ENCODE measurements at regions of chr3 and their contacts with region 1.

Region 1: GRCh38 chr3:52001443-52001974 is 5.8 kb upstream of the RPL29 start:
- DNase-seq: peak; percentile 85
- ATAC-seq: peak; percentile 99
- H3K4me3 Mint-ChIP-seq: no peak overlapping the region
- H3K27ac Mint-ChIP-seq: no peak overlapping the region
- H3K4me1 Mint-ChIP-seq: peaks cover 5% of the 10 kb centered on the region
- H3K27me3 Mint-ChIP-seq: peaks cover 2% of the 10 kb centered on the region
- CTCF ChIP-seq: peak; percentile 56

Region 2: DNA sequence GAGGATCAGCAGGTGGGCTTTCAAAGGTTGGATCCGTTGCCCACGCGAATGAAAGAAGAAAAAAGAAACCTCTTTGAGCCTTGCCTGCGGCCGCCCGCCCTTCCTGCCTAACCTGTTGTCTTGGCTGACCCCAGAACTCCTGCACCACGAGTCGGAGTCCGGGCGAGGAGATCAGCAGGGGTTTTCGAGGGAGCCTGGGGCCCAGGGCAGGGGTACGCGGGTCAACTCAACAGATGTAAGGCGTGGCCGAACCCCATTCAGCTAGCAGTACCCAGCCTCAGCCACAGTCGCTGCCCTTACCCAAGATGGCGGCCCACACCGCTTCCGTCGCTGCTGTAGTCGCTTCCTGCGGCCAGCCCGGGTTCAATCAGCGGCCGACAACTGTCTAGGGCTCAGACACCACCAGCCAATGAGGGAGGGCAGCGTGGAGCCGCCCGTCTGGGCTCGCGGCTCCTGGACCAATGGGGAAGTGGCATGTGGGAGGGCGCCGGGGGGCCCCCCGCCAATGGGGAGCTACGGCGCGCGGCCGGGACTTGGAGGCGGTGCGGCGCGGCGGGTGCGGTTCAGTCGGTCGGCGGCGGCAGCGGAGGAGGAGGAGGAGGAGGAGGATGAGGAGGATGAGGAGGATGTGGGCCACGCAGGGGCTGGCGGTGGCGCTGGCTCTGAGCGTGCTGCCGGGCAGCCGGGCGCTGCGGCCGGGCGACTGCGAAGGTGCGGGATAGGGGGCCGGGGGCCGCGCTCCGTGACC is 616.6 kb before region 1 on chr3 and contains the start of gene MANF:
- CTCF ChIA-PET with region 1: no interaction called
- POLR2A ChIA-PET with region 1: no interaction called
- intact Hi-C with region 1: no loop called
- DNase-seq: peak; percentile 89
- ATAC-seq: peak; percentile 95
- H3K4me3 Mint-ChIP-seq: peak within 1 kb of the TSS; percentile 99
- H3K27ac Mint-ChIP-seq: peak within 1 kb of the TSS; percentile 98
- H3K4me1 Mint-ChIP-seq: peaks cover 49% of the 10 kb centered on the region
- H3K27me3 Mint-ChIP-seq: no peaks in the 10 kb centered on the region
- CTCF ChIP-seq: no peak
- total RNA-seq, gene MANF: 64.2 and 66.1 TPM in 2 replicates

Region 3: GRCh38 chr3:52123106-52123725 is 121.7 kb after region 1 on chr3:
- CTCF ChIA-PET with region 1: interaction called, 38 read pairs
- POLR2A ChIA-PET with region 1: no interaction called
- intact Hi-C with region 1: loop called (anchors 1 kb)
- DNase-seq: peak; percentile 60
- ATAC-seq: peak; percentile 74
- H3K4me3 Mint-ChIP-seq: no peak overlapping the region
- H3K27ac Mint-ChIP-seq: peak overlapping the region; percentile 82
- H3K4me1 Mint-ChIP-seq: peaks cover 34% of the 10 kb centered on the region
- H3K27me3 Mint-ChIP-seq: no peaks in the 10 kb centered on the region
- CTCF ChIP-seq: no peak

Region 4: DNA sequence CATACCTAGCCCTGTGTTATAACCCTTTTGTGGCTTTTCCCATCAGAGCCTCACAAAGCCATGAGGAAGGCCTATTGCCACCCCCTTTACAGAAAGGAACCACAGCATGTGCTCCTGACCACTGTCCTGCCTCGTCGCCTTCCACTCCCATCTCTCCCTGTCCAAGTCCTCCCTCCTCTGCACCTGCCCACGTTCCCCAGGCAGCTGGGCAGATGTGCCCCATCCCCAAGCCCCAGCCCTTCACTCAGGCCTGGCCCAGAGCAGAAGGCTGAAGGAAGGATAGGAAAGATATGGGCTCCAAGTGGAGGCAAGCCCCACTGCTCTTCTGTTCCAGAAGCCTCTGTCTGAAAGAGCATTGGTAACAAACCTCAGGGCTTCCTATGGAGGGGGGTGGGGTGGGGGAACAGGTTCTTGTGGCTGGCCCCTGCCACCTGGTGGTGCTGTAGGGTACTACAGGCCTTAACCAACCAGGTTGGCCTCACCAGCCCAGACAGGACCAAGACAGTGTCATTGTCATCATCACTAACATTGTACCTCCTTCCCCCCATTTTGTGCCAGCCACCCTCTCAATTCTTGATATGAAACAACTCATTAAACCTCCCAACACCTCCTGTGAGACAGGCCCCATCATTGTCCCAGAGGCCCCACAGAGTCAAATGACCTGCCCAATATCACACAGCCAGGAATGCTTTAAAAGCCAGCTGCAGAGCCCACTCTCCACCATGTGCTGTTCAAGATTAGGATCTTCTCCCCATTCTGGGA is 142.7 kb after region 1 on chr3:
- CTCF ChIA-PET with region 1: interaction called, 78 read pairs
- POLR2A ChIA-PET with region 1: interaction called, 3 read pairs
- intact Hi-C with region 1: loop called (anchors 1 kb)
- DNase-seq: peak; percentile 73
- ATAC-seq: peak; percentile 100
- H3K4me3 Mint-ChIP-seq: no peak overlapping the region
- H3K27ac Mint-ChIP-seq: no peak overlapping the region
- H3K4me1 Mint-ChIP-seq: peaks cover 4% of the 10 kb centered on the region
- H3K27me3 Mint-ChIP-seq: no peaks in the 10 kb centered on the region
- CTCF ChIP-seq: peak; percentile 66

Region 5: DNA sequence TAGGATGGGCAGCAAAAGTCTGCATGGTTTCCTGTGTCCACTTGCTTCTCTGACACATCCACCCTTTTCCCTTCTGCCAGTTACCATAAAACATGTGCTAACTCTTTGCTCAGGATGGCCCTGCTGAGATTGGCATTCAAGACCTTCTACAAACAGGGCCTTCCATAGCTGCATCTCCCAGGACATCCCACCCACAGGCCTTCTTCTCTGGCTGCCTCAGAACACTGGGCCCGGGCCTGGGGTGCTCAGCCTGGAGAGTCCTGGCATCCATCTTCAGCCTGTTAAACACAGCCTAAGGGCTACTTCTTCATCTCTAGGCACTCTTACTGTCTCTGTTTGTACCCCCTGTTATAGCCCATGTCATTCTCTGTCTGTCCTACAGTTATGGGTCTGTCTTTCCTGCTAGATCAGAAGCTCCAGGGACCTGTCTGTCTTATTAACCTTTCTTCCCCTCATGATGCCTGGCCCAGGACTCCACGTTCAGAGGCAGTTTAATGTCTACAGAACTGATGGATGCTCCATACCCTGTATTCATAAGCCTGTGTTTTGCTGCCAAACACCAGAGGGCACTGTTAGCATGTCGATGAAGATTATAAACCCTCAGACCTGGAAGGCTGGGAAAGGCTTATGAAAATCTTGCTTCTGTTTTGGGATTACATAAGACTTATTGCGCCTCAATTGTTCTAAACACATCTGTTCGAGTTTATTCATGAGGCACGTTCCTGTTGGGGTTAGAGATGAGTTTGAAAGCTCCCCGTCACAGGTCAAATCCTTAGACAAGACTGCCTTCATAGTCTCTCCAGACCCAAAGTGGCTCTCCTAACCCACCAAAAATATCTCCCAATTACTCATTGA is 426.9 kb after region 1 on chr3:
- CTCF ChIA-PET with region 1: no interaction called
- POLR2A ChIA-PET with region 1: no interaction called
- intact Hi-C with region 1: no loop called
- DNase-seq: no peak
- ATAC-seq: peak; percentile 57
- H3K4me3 Mint-ChIP-seq: no peak overlapping the region
- H3K27ac Mint-ChIP-seq: no peak overlapping the region
- H3K4me1 Mint-ChIP-seq: peaks cover 4% of the 10 kb centered on the region
- H3K27me3 Mint-ChIP-seq: no peaks in the 10 kb centered on the region
- CTCF ChIP-seq: no peak

Region 6: GRCh38 chr3:52444860-52445793 is 443.6 kb after region 1 on chr3 and contains the start of gene SEMA3G:
- CTCF ChIA-PET with region 1: no interaction called
- POLR2A ChIA-PET with region 1: no interaction called
- intact Hi-C with region 1: loop called (anchors 2 kb)
- DNase-seq: peak; percentile 62
- ATAC-seq: peak; percentile 97
- H3K4me3 Mint-ChIP-seq: no peak within 1 kb of the TSS
- H3K27ac Mint-ChIP-seq: no peak within 1 kb of the TSS
- H3K4me1 Mint-ChIP-seq: peaks cover 9% of the 10 kb centered on the region
- H3K27me3 Mint-ChIP-seq: peaks cover 3% of the 10 kb centered on the region
- CTCF ChIP-seq: no peak
- total RNA-seq, gene SEMA3G: not detected in 2 replicates

Measured in activated B cell treated with CpG ODN at 0.5 μM for 24 hours (primary cell).